Gastrocnemius medialis (tissue), 4 donors: ENCODE measurements at regions of chr10 and their contacts with region 1.

Region 1: DNA sequence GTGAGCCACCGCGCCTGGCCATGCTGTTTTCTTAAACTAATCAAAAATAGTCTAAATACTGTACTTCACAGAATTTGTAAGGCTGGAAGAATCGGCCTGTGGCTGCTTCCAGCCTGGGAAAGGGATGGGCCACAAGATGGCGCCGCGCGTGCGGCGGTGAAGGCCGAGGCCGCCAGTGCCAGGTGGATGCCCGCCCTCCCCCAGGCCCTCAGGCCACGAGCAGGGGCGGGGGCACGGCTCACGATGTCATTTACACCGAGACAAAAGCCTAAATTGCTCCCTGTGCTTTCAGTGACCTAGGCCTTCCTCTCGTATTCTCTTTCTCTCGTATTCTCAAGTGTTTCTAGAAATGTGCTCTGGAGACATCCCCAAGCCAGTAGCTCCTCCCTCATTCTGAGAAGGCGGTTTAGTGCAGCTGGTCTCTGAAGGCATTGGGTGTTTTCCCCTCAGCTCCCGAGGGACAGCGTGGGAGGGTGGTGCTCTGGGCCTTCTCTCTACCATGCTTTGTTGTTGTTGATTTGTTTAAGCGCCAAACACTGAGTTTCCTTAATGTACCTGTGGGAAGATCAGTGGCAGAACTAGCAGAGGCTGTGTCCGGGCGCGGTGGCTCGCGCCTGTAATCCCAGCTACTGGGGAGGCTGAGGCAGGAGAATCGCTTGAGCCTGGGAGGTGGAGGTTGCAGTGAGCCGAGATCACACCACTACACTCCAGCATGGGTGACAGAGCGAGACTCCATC is 68.4 kb downstream of the CDC123 start:
- DNase-seq: peak; percentile 22 to 36
- ATAC-seq: peak; percentile 39 to 65
- H3K4me3 ChIP-seq: peak overlapping the region in 3 of 4 donors; percentile 33 to 47 (median 41)
- H3K27ac ChIP-seq: peak overlapping the region in 1 of 4 donors; percentile 22
- H3K4me1 ChIP-seq: no peaks in the 10 kb centered on the region
- H3K27me3 ChIP-seq: no peaks in the 10 kb centered on the region
- CTCF ChIP-seq: peak; percentile 48 to 84 (median 73)
- POLR2A ChIP-seq: no peak

Region 2: GRCh38 chr10:12337453-12338372 is 73.3 kb after region 1 on chr10:
- in situ Hi-C with region 1: no loop called
- intact Hi-C with region 1: no loop called
- DNase-seq: no peak
- ATAC-seq: no peak
- H3K4me3 ChIP-seq: no peak overlapping the region
- H3K27ac ChIP-seq: no peak overlapping the region
- H3K4me1 ChIP-seq: no peaks in the 10 kb centered on the region
- H3K27me3 ChIP-seq: no peaks in the 10 kb centered on the region
- CTCF ChIP-seq: no peak
- POLR2A ChIP-seq: no peak

Region 3: GRCh38 chr10:12656518-12657142 is 392.3 kb after region 1 on chr10:
- in situ Hi-C with region 1: no loop called
- intact Hi-C with region 1: loop called (anchors 5 kb)
- DNase-seq: no peak
- ATAC-seq: no peak
- H3K4me3 ChIP-seq: no peak overlapping the region
- H3K27ac ChIP-seq: no peak overlapping the region
- H3K4me1 ChIP-seq: no peaks in the 10 kb centered on the region
- H3K27me3 ChIP-seq: no peaks in the 10 kb centered on the region
- CTCF ChIP-seq: peak in 3 of 5 experiments; percentile 32 to 48 (median 43)
- POLR2A ChIP-seq: no peak

Region 4: DNA sequence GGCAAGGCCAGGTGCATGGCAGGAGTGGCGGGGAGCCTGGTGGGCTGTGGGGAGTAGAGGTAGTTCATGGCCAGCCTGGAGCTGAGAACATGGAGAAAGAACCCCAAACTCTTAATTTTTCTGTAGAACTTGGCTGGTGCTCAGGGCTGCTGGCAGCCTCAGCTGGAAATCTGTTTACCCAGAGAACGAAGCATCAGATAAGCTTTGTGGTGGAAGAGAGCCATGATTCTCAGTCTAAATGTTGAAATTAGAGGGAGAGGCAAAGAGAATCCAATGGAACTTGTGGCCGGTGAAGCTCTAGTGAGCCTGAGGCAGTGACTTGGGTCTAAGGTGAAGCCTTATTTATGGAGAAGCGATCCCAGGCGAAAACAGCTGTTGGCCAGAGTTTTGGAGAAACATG is 610.7 kb after region 1 on chr10:
- in situ Hi-C with region 1: loop called in 1 of 4 experiments (anchors 25 kb)
- intact Hi-C with region 1: no loop called
- DNase-seq: no peak
- ATAC-seq: no peak
- H3K4me3 ChIP-seq: no peak overlapping the region
- H3K27ac ChIP-seq: no peak overlapping the region
- H3K4me1 ChIP-seq: no peaks in the 10 kb centered on the region
- H3K27me3 ChIP-seq: no peaks in the 10 kb centered on the region
- CTCF ChIP-seq: no peak
- POLR2A ChIP-seq: no peak

Region 5: GRCh38 chr10:12902135-12902572 is 637.8 kb after region 1 on chr10:
- in situ Hi-C with region 1: loop called in 2 of 4 experiments (anchors 25 kb)
- intact Hi-C with region 1: loop called (anchors 10 kb)
- DNase-seq: no peak
- ATAC-seq: no peak
- H3K4me3 ChIP-seq: no peak overlapping the region
- H3K27ac ChIP-seq: no peak overlapping the region
- H3K4me1 ChIP-seq: no peaks in the 10 kb centered on the region
- H3K27me3 ChIP-seq: no peaks in the 10 kb centered on the region
- CTCF ChIP-seq: peak; percentile 20 to 75 (median 63)
- POLR2A ChIP-seq: no peak

Region 6: DNA sequence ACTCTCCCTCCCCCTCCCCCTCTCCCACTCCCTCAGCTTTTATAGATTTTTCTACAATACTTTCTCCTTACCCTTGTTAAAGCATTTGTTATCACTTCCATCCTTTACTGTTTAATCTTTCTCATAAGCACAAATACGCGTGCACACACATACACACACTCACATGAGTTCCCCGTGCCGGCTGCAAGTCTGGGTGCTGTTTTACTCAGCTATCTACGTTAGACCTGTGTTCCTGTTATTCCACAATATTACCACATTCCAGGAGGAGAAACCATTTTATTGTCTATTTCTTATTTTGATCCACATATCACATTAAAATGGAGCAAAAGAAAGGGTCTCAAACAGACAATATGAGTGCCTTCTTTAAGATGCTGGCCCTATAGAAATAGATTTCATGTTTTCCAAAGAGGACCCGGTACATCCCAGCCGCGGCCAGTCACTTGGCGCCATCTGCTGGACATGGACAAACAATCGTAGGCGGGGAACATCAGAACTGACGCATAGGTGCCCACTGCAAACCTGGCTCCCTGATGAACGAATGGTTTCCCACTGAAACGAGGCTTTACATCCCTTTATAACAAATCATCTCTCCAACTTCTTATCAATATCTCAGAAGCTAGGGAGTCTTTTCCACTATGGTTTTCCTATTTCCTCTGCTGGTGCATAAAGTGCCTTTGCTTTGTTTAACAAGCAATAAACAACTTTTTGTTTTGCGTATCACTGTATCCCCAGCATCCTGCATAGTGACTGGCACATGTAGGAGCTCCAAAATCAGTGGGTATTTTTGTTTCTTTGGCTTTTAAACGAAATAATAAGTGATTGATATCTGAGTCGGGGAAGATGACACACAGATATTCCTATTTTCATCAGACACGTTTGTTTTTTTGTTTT is 810.4 kb after region 1 on chr10:
- in situ Hi-C with region 1: loop called in 3 of 4 experiments (anchors 25 kb)
- intact Hi-C with region 1: no loop called
- DNase-seq: peak in 1 of 2 donors; percentile 33
- ATAC-seq: peak in 1 of 2 donors; percentile 56
- H3K4me3 ChIP-seq: no peak overlapping the region
- H3K27ac ChIP-seq: no peak overlapping the region
- H3K4me1 ChIP-seq: no peaks in the 10 kb centered on the region
- H3K27me3 ChIP-seq: peaks cover 0 to 4% (median 0%) of the 10 kb centered on the region in 3 donors
- CTCF ChIP-seq: peak; percentile 50 to 85 (median 66)
- POLR2A ChIP-seq: no peak